AG04449 (cell line): ENCODE measurements at regions of chr3 and their contacts with region 1.

Region 1: GRCh38 chr3:173553635-173554280 is 156.2 kb downstream of the NLGN1 start:
- DNase-seq: no peak
- H3K4me3 ChIP-seq: no peak overlapping the region
- CTCF ChIP-seq: peak; percentile 59

Region 2: DNA sequence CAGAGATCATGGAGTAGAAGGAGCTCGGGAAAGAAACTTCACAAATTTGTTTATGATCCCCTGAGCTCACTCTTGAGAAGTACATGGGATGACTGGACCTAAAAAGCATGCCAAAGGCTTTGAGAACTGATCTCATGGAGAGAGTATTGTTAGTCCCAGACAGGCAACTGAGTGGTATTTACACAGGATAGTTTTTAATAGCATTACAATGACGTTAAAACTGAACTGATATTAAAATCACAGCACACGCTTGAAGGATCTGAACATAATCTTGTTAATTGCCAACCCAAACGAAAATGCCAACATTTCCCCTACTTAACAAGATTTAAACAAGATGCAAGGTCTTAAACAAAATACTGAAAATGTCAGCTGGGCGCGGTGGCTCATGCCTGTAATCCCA is 269.5 kb before region 1 on chr3:
- CTCF ChIA-PET with region 1: no interaction called
- POLR2A ChIA-PET with region 1: no interaction called
- DNase-seq: no peak
- H3K4me3 ChIP-seq: no peak overlapping the region
- CTCF ChIP-seq: no peak

Region 3: GRCh38 chr3:173371848-173372487 is 181.8 kb before region 1 on chr3:
- CTCF ChIA-PET with region 1: interaction called, 57 read pairs
- POLR2A ChIA-PET with region 1: no interaction called
- DNase-seq: no peak
- H3K4me3 ChIP-seq: no peak overlapping the region
- CTCF ChIP-seq: peak; percentile 73

Region 4: DNA sequence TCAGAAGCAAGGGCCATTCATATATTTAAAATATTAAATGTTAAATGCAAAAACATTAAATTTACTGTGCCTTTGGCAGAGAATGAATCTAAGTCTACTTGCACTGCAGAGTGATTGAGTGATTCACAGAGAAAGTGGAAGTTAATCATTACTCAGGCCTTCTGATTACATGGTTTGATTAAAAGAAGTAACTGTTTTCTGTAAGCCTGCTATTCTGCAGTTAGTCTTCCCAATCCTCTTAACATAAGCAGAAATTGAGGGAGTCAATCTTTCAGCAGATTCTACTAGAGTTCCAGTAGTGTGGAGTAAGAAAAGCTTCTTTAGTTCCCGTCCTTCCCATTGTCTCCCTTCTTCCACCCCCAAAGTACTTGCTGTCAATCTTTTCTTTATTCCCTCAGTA is 154.7 kb before region 1 on chr3:
- CTCF ChIA-PET with region 1: interaction called, 13 read pairs
- POLR2A ChIA-PET with region 1: no interaction called
- DNase-seq: no peak
- H3K4me3 ChIP-seq: peak overlapping the region; percentile 18
- CTCF ChIP-seq: no peak

Region 5: GRCh38 chr3:173411375-173411973 is 142.3 kb before region 1 on chr3:
- CTCF ChIA-PET with region 1: interaction called, 49 read pairs
- POLR2A ChIA-PET with region 1: no interaction called
- DNase-seq: no peak
- H3K4me3 ChIP-seq: no peak overlapping the region
- CTCF ChIP-seq: peak; percentile 39

Region 6: DNA sequence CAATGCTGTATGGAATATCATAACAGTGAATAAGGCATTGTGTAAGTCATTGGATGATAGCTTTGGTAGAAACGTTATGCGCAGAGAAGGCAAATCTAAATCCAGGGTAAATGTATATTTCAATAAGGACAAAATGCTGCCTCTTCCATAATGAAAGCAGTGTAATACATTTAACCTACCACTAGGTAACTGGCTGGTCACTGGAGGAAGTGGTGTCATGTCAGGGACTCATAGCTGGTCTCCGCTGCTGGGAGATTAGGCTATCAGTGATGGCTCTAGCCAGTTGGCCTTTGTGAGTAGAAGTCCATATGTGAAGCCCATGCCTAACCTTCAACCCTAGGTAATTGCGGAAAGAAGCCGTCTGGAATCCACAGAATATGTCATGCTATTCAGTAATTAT is 15.3 kb before region 1 on chr3:
- CTCF ChIA-PET with region 1: interaction called, 27 read pairs
- POLR2A ChIA-PET with region 1: no interaction called
- DNase-seq: no peak
- H3K4me3 ChIP-seq: no peak overlapping the region
- CTCF ChIP-seq: no peak

Region 7: GRCh38 chr3:173568623-173569022 is 14.9 kb after region 1 on chr3:
- CTCF ChIA-PET with region 1: interaction called, 29 read pairs
- POLR2A ChIA-PET with region 1: no interaction called
- DNase-seq: no peak
- H3K4me3 ChIP-seq: no peak overlapping the region
- CTCF ChIP-seq: no peak